ENCODE measurements at regions of chr13 and their contacts with region 1.

Region 1: GRCh38 chr13:20828539-20829364 is 55.0 kb upstream of the EEF1AKMT1 start:
- DNase-seq: peak; percentile 64
- ATAC-seq: peak; percentile 40
- H3K4me3 ChIP-seq: peak overlapping the region; percentile 30; the same call in 1 of the 2 replicates
- H3K27ac ChIP-seq: peak overlapping the region; percentile 40; the same call in 1 of the 2 replicates
- H3K4me1 ChIP-seq: peaks cover 7% of the 10 kb centered on the region
- H3K27me3 ChIP-seq: no peaks in the 10 kb centered on the region
- CTCF ChIP-seq: peak; percentile 85
- POLR2A ChIP-seq: no peak
- RAD21 ChIP-seq: peak; percentile 85

Region 2: GRCh38 chr13:20197361-20197834 is 631.4 kb before region 1 on chr13:
- CTCF ChIA-PET with region 1: no interaction called
- POLR2A ChIA-PET with region 1: no interaction called
- dilution Hi-C with region 1: no loop called
- in situ Hi-C with region 1: loop called (anchors 25 kb)
- intact Hi-C with region 1: loop called (anchors 10 kb)
- DNase-seq: peak; percentile 56
- ATAC-seq: peak; percentile 73
- H3K4me3 ChIP-seq: no peak overlapping the region
- H3K27ac ChIP-seq: no peak overlapping the region
- H3K4me1 ChIP-seq: peaks cover 2% of the 10 kb centered on the region; the same call in 1 of the 2 replicates
- H3K27me3 ChIP-seq: peaks cover 65% of the 10 kb centered on the region
- CTCF ChIP-seq: peak; percentile 80
- POLR2A ChIP-seq: no peak
- RAD21 ChIP-seq: peak; percentile 76

Region 3: DNA sequence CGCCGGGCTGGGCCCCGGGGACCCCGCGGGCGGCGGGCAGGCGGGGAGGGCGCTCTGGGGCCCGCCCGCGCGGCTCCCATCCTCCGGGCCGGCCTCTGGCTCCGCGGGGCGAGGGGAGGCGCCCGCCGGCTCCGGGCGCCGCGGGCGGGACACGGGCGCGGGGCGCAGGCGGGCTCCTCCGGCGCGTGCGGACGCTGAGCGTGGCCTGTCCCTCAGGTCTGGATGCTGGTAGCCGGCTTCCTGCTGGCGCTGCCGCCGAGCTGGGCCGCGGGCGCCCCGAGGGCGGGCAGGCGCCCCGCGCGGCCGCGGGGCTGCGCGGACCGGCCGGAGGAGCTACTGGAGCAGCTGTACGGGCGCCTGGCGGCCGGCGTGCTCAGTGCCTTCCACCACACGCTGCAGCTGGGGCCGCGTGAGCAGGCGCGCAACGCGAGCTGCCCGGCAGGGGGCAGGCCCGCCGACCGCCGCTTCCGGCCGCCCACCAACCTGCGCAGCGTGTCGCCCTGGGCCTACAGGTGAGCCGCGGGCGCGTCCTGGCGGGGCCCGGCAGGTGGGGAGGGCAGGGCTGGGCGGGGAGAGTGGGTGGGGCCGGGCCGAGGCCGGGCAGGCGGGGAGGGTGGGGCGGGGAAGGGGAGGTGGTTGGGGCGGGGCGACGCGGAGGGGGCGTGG is 124.8 kb before region 1 on chr13:
- CTCF ChIA-PET with region 1: no interaction called
- POLR2A ChIA-PET with region 1: no interaction called
- dilution Hi-C with region 1: no loop called
- in situ Hi-C with region 1: loop called (anchors 5 kb)
- intact Hi-C with region 1: no loop called
- DNase-seq: peak; percentile 82
- ATAC-seq: peak; percentile 91
- H3K4me3 ChIP-seq: peak overlapping the region; percentile 77
- H3K27ac ChIP-seq: no peak overlapping the region
- H3K4me1 ChIP-seq: peaks cover 4% of the 10 kb centered on the region; the same call in 1 of the 2 replicates
- H3K27me3 ChIP-seq: peaks cover 4% of the 10 kb centered on the region
- CTCF ChIP-seq: peak; percentile 84
- POLR2A ChIP-seq: peak; percentile 29; the same call in 1 of the 2 replicates
- RAD21 ChIP-seq: peak; percentile 52

Region 4: DNA sequence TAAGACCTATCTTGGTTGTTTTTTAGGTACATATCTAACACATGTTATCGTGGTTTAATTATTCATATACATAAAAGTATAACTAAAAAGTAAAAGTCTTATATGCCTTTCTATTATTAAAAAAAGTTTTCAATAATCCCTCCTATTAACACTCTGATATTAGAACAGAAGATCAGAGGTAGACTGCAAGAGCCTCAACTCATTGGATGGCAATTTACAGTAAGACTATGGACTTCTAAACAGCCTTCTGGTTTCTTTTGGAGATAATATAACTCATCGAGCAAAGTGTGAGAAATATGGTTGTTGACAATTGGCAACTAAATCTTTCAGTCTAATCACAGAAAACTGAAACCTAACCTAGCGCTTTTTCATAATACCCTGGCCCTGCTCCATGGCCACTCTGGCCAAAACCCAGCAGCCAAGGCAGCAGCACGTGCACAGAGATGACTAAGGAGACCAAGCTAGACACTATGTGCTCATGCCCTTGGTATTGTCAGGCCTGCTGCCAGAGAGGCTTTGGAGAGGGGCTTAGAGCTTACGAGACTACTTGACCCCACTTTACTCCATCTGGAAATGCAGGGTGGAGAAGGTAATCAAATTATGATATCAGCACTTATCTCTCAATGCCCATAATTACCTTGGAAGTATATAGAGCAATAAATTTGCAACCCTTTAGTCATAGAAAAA is 14.4 kb before region 1 on chr13:
- CTCF ChIA-PET with region 1: interaction called, 14 read pairs
- POLR2A ChIA-PET with region 1: no interaction called
- dilution Hi-C with region 1: no loop called
- in situ Hi-C with region 1: no loop called
- intact Hi-C with region 1: loop called (anchors 1 kb)
- DNase-seq: peak; percentile 96
- ATAC-seq: peak; percentile 77
- H3K4me3 ChIP-seq: no peak overlapping the region
- H3K27ac ChIP-seq: peak overlapping the region; percentile 25; the same call in 1 of the 2 replicates
- H3K4me1 ChIP-seq: peaks cover 7% of the 10 kb centered on the region
- H3K27me3 ChIP-seq: no peaks in the 10 kb centered on the region
- CTCF ChIP-seq: no peak
- POLR2A ChIP-seq: no peak
- RAD21 ChIP-seq: no peak

Region 5: DNA sequence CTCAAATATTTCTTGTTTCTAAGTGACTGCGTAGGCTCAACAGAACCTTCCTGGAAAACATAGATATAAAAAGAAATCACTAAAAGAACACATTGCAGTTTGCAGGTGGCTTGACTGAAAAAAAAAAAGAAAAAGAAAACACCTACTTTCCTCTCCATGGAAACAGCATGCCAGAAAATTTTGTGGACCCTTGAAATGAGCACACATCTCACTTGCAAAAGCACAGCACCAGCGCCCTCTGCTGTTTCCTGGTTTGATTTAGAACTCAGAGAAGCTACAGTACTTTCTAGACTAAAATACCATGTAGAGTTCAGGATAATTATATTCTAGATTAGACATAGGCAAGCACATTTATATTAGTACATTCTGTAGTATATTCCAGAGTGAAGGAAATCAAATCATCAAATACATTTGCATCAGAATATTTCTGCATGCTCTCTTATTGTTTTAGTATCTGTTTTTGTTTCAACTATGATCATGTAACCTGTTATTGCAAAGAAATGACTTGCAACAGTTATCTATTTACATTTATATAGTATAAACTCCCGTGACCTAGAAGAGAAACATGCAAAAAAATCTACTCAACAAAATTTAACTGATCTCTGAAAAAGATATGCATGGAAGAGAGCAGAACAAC is 96.1 kb after region 1 on chr13:
- CTCF ChIA-PET with region 1: interaction called, 4 read pairs
- POLR2A ChIA-PET with region 1: no interaction called
- dilution Hi-C with region 1: no loop called
- in situ Hi-C with region 1: no loop called
- intact Hi-C with region 1: loop called (anchors 1 kb)
- DNase-seq: peak; percentile 84
- ATAC-seq: peak; percentile 80
- H3K4me3 ChIP-seq: no peak overlapping the region
- H3K27ac ChIP-seq: no peak overlapping the region
- H3K4me1 ChIP-seq: no peaks in the 10 kb centered on the region
- H3K27me3 ChIP-seq: 0 out of 2 replicates have a peak, but pooled peaks cover 2% of the 10 kb centered on the region
- CTCF ChIP-seq: peak; percentile 91
- POLR2A ChIP-seq: no peak
- RAD21 ChIP-seq: peak; percentile 91

Measured in IMR-90 (cell line).